MCF 10A (cell line): ENCODE measurements at regions of chr15 and their contacts with region 1.

Region 1: GRCh38 chr15:71800835-71801745 is 9.3 kb upstream of the NR2E3 start:
- DNase-seq: peak; percentile 77
- H3K4me3 Mint-ChIP-seq: no peak overlapping the region
- H3K27ac Mint-ChIP-seq: no peak overlapping the region
- H3K4me1 Mint-ChIP-seq: peaks cover 6% of the 10 kb centered on the region
- H3K27me3 Mint-ChIP-seq: no peaks in the 10 kb centered on the region
- CTCF ChIP-seq: peak; percentile 93

Region 2: DNA sequence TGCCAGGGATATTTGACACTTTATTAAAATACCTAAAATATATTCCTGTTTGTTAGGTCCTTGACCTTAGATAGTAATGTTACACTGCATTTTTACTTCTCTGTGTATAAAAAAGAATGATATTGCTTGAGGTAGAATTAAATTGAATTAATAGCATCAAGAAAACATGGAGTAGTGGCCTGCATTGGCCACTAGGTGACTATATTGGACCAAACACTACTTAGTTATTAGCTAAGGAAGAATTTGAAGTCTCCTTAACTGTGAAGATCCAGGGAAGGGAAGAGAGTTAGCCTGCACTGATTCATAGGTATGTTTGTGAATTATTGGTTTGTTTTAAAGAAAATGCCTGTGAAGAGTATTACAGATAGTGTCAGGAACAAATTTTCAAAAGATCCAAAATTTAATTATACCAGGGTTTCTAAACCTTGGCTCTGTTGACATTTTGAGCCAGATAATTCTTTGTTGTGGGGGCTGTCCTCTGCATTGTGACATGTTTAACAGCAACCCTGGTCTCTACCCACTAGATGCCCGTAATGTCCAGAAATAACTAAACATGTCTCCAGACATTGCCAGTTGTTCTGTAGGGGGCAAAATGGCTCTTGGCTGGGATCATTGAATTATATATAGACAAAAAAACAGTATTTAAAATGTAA is 789.5 kb before region 1 on chr15:
- CTCF ChIA-PET with region 1: interaction called, 3 read pairs
- POLR2A ChIA-PET with region 1: no interaction called
- intact Hi-C with region 1: loop called (anchors 1 kb)
- DNase-seq: peak; percentile 60
- H3K4me3 Mint-ChIP-seq: no peak overlapping the region
- H3K27ac Mint-ChIP-seq: no peak overlapping the region
- H3K4me1 Mint-ChIP-seq: no peaks in the 10 kb centered on the region
- H3K27me3 Mint-ChIP-seq: no peaks in the 10 kb centered on the region
- CTCF ChIP-seq: peak; percentile 76

Region 3: DNA sequence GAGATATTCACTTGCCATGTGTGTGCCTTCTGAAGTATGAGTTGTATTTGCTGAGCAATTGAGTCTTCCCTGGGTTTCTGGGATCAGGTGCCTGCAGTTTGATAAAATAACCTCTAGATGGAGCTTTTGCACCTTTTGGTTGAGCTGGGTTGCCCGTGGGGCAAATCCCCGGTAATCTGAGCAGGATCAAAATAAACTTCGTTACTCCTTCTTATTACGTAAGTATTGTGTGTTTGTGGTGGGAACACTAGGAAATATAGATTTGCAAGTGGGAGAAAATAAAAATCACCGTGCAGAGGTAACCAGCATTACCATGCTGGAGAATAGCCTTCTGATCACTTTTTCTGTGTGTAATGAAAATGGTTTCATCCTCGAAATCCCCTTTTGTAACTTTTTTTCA is 268.1 kb before region 1 on chr15:
- CTCF ChIA-PET with region 1: interaction called, 5 read pairs
- POLR2A ChIA-PET with region 1: no interaction called
- intact Hi-C with region 1: loop called (anchors 1 kb)
- DNase-seq: peak; percentile 74
- H3K4me3 Mint-ChIP-seq: peak overlapping the region; percentile 24
- H3K27ac Mint-ChIP-seq: no peak overlapping the region
- H3K4me1 Mint-ChIP-seq: peaks cover 2% of the 10 kb centered on the region
- H3K27me3 Mint-ChIP-seq: no peaks in the 10 kb centered on the region
- CTCF ChIP-seq: peak; percentile 80

Region 4: DNA sequence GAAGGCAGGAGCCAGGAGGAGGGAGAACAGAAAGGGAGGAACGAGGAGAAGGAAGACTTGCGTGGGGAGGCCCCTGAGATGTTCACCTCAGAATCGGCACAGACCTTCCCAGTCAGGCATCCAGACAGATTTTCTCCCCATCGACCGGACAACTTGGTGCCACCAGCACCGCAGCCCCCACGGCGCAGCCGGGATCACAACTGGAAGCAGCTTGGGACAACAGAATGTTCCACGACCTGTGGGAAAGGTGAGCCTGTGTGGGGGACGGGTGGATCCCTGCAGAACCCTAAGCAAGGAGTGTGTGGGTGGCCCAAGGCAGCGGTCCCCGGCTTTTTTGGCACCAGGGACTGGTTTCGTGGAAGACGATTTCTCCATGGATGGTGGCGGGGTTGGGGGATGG is 63.3 kb before region 1 on chr15:
- CTCF ChIA-PET with region 1: interaction called, 149 read pairs
- POLR2A ChIA-PET with region 1: no interaction called
- intact Hi-C with region 1: no loop called
- DNase-seq: no peak
- H3K4me3 Mint-ChIP-seq: no peak overlapping the region
- H3K27ac Mint-ChIP-seq: no peak overlapping the region
- H3K4me1 Mint-ChIP-seq: no peaks in the 10 kb centered on the region
- H3K27me3 Mint-ChIP-seq: no peaks in the 10 kb centered on the region
- CTCF ChIP-seq: no peak

Region 5: DNA sequence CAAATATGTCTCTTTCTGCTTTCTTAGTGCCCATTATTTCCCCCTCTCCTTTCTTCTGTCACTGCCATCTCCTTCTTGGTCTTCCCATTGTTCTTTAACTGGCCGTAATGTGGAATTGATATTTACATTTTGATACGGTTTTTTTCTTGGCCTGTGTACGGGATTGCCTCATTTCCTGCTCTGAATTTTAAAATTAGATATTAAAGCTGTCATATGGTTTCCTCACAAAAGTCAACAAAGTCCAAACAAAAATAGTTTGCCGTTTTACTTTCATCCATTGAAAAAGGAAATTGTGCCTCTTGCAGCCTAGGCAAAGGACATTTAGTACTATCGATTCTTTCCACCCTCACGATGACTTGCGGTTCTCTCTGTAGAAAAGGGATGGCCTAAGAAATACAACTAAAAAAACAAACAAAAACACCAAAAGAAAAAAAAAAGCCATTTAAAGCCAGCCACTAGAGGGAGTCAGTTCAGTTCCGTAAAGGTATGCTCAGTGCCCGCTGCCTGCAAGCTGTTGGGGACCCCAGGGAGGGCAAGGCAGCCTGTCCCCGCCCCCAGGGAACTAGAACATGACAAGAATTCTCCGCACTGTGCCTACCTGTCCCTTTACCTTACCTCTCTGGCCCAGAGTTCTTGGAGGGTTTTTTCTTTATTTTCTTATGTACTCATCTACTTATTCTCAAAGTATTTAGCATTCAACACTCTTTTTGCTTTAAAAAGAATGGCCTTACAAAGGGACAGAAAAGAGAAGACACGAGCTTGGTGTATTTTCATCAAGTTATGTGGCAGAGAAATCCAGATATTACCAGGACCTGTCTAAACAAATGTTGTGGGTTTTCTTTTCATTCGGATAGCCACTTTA is 20.7 kb before region 1 on chr15:
- CTCF ChIA-PET with region 1: interaction called, 12 read pairs
- POLR2A ChIA-PET with region 1: interaction called, 3 read pairs
- intact Hi-C with region 1: loop called (anchors 1 kb)
- DNase-seq: peak; percentile 57
- H3K4me3 Mint-ChIP-seq: no peak overlapping the region
- H3K27ac Mint-ChIP-seq: peak overlapping the region; percentile 76
- H3K4me1 Mint-ChIP-seq: peaks cover 10% of the 10 kb centered on the region
- H3K27me3 Mint-ChIP-seq: no peaks in the 10 kb centered on the region
- CTCF ChIP-seq: peak; percentile 66

Region 6: DNA sequence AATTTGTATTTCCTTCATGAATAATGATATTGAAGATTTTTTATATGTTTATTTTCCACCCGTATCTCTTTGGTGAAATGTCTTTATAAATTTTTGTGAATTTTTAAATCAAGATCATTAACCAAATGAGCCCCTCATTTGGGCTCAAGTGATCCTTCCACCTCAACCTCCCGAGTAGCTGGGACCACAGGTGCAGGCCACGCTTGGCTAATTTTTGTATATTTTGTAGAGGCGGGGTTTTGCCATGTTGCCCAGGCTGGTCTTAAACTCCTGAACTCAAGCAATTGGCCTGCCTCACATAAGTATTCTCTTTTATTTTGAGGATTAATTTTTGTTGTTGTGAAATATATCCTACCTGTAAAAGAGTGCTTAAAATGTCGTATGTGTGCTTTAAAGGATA is 889.8 kb after region 1 on chr15:
- CTCF ChIA-PET with region 1: no interaction called
- POLR2A ChIA-PET with region 1: no interaction called
- intact Hi-C with region 1: no loop called
- DNase-seq: no peak
- H3K4me3 Mint-ChIP-seq: no peak overlapping the region
- H3K27ac Mint-ChIP-seq: no peak overlapping the region
- H3K4me1 Mint-ChIP-seq: no peaks in the 10 kb centered on the region
- H3K27me3 Mint-ChIP-seq: no peaks in the 10 kb centered on the region
- CTCF ChIP-seq: no peak